Lower lobe of right lung (tissue), 2 donors: ENCODE measurements at regions of chr2 and their contacts with region 1.

Region 1: GRCh38 chr2:86216577-86217555 is 17.6 kb downstream of the MRPL35 start:
- DNase-seq: no peak
- ATAC-seq: no peak
- H3K4me3 ChIP-seq: no peak overlapping the region
- H3K27ac ChIP-seq: no peak overlapping the region
- H3K4me1 ChIP-seq: peaks cover 19% of the 10 kb centered on the region
- H3K27me3 ChIP-seq: peaks cover 6% of the 10 kb centered on the region
- CTCF ChIP-seq: no peak

Region 2: GRCh38 chr2:86368161-86368824 is 151.4 kb after region 1 on chr2:
- intact Hi-C with region 1: loop called (anchors 10 kb)
- DNase-seq: peak; percentile 49
- ATAC-seq: peak; percentile 62 to 72
- H3K4me3 ChIP-seq: no peak overlapping the region
- H3K27ac ChIP-seq: no peak overlapping the region
- H3K4me1 ChIP-seq: peaks cover 8% of the 10 kb centered on the region
- H3K27me3 ChIP-seq: no peaks in the 10 kb centered on the region
- CTCF ChIP-seq: peak; percentile 66